ENCODE measurements at regions of chr4 and their contacts with region 1.

Region 1: GRCh38 chr4:139453371-139454110 is 380 bp upstream of the RAB33B start:
- DNase-seq: peak; percentile 95
- H3K4me3 Mint-ChIP-seq: peak overlapping the region; percentile 94
- H3K27ac Mint-ChIP-seq: peak overlapping the region; percentile 99
- H3K4me1 Mint-ChIP-seq: peaks cover 58% of the 10 kb centered on the region
- H3K27me3 Mint-ChIP-seq: no peaks in the 10 kb centered on the region

Region 2: GRCh38 chr4:139099366-139099982 is 354.1 kb before region 1 on chr4:
- intact Hi-C with region 1: loop called (anchors 1 kb)
- DNase-seq: peak; percentile 54
- H3K4me3 Mint-ChIP-seq: no peak overlapping the region
- H3K27ac Mint-ChIP-seq: no peak overlapping the region
- H3K4me1 Mint-ChIP-seq: no peaks in the 10 kb centered on the region
- H3K27me3 Mint-ChIP-seq: no peaks in the 10 kb centered on the region

Region 3: GRCh38 chr4:139301113-139301820 is 152.3 kb before region 1 on chr4 and contains the start of gene NAA15:
- intact Hi-C with region 1: loop called (anchors 1 kb)
- DNase-seq: peak; percentile 97
- H3K4me3 Mint-ChIP-seq: peak within 1 kb of the TSS; percentile 95
- H3K27ac Mint-ChIP-seq: peak within 1 kb of the TSS; percentile 97
- H3K4me1 Mint-ChIP-seq: peaks cover 69% of the 10 kb centered on the region
- H3K27me3 Mint-ChIP-seq: no peaks in the 10 kb centered on the region
- total RNA-seq, gene NAA15: 104 and 110 TPM in 2 replicates

Region 4: DNA sequence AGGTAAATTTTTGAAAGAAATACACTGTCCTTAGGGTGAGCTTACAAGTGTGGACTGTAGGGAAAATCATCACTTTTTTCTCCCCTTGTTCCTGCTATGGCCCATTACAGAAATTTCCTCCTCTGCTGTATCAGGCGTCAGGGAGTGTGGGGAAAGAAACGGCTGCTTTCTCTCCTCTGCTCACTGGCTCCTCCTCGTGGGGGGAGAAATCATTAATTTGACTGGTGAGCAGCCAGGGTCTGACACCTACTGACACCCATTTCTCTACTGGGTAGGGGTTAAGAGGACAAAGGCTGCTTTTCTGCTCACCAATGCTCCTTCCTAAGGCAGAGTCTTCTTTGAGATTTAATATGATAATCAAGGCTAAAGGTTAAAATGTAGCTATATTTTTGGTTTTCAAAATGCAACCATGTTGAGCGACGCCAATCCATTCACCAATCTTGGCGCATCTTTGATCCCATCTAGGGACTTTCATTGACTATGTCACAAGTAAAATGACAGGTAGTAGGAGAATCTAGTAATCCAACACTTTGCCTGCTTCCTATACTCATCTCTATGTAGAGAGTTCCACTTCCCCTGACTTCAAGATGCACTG is 77.4 kb after region 1 on chr4:
- intact Hi-C with region 1: loop called (anchors 1 kb)
- DNase-seq: peak; percentile 20
- H3K4me3 Mint-ChIP-seq: no peak overlapping the region
- H3K27ac Mint-ChIP-seq: peak overlapping the region; percentile 37
- H3K4me1 Mint-ChIP-seq: peaks cover 6% of the 10 kb centered on the region
- H3K27me3 Mint-ChIP-seq: no peaks in the 10 kb centered on the region

Region 5: GRCh38 chr4:140176735-140177134 is 723.2 kb after region 1 on chr4:
- intact Hi-C with region 1: no loop called
- DNase-seq: no peak
- H3K4me3 Mint-ChIP-seq: no peak overlapping the region
- H3K27ac Mint-ChIP-seq: no peak overlapping the region
- H3K4me1 Mint-ChIP-seq: no peaks in the 10 kb centered on the region
- H3K27me3 Mint-ChIP-seq: peaks cover 38% of the 10 kb centered on the region

Region 6: DNA sequence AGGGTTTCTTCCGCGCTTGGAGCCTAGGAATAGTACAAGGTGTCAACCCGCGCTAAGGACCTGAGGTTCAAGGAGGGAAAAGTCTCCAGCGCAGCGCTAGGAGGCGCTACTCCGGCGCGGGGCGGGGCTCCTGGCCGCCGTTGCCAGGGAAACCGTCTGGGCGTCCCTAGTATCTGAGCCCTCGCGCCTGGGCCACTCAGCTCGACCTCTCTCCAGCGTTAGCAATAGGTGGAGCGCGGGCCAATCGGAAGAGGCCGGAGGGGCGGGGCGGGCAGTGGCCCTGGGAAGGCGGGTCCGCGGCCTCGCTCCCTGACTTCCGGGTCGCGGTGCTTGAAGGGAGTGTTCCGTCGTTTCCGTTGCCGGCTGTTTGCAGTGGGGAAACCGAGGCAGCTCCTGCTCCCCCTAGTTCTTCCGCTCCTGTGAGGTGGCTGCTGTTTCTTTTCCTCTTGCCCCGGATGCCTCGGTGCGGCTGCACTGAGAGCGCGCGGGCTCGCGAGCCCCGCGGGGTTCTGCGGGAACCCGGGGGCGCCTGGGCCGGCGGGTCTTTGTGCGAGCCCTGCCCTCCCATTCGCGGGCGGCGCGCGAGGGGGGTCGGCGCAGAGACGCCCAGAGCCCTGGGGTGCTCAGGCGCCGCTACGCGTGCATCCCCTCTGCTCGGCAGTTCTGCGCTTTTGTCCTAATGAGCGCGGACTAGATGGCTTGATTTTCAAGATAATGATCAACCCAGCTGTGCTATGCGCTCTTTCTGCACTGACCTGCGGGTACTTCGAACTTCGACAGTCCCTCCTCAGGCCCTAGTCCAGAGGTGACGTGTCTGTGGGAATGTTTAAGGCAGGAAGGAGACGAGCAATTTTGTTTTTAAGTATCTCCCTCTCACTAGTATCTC is 1070.6 kb after region 1 on chr4 and contains the start of gene ELMOD2:
- intact Hi-C with region 1: loop called (anchors 5 kb)
- DNase-seq: peak; percentile 97
- H3K4me3 Mint-ChIP-seq: peak within 1 kb of the TSS; percentile 88
- H3K27ac Mint-ChIP-seq: peak within 1 kb of the TSS; percentile 55
- H3K4me1 Mint-ChIP-seq: peaks cover 19% of the 10 kb centered on the region
- H3K27me3 Mint-ChIP-seq: no peaks in the 10 kb centered on the region
- total RNA-seq, gene ELMOD2: 10.8 and 15.7 TPM in 2 replicates

Measured in activated T-helper 1 cell treated with anti-CD3 and anti-CD28 coated beads, Interleukin-12 subunit alpha, Interleukin-12 subunit beta, Interleukin-2, Interleukin-4 antibody, amounts not matched to agents 30 ng/mL and 10 ng/mL and 1 ng/mL, durations not matched to agents 14 hours and 24 hours and 36 hours (primary cell).